Naive thymus-derived CD4-positive, alpha-beta T cell (primary cell): ENCODE measurements at regions of chr18 and their contacts with region 1.

Region 1: GRCh38 chr18:74495581-74496507 is at the start of gene CNDP2:
- DNase-seq: peak; percentile 93 to 100 (median 94)
- ATAC-seq: peak; percentile 89
- H3K4me3 ChIP-seq: peak within 1 kb of the TSS; percentile 75
- H3K4me3 Mint-ChIP-seq: peak within 1 kb of the TSS; percentile 79 to 98 (median 92)
- H3K27ac ChIP-seq: peak within 1 kb of the TSS; percentile 93
- H3K27ac Mint-ChIP-seq: peak within 1 kb of the TSS; percentile 95 to 100 (median 98)
- H3K4me1 ChIP-seq: peaks cover 33 to 43% of the 10 kb centered on the region in 2 donors
- H3K4me1 Mint-ChIP-seq: peaks cover 21 to 62% (median 49%) of the 10 kb centered on the region in 7 donors
- H3K27me3 ChIP-seq: no peaks in the 10 kb centered on the region
- H3K27me3 Mint-ChIP-seq: peaks cover 0 to 20% (median 0%) of the 10 kb centered on the region in 5 donors
- total RNA-seq, gene CNDP2: 112 to 169 (median 148) TPM

Region 2: GRCh38 chr18:74040459-74041332 is 455.1 kb before region 1 on chr18:
- CTCF ChIA-PET with region 1: no interaction called
- POLR2A ChIA-PET with region 1: no interaction called
- intact Hi-C with region 1: loop called in 1 of 2 experiments (anchors 1 kb)
- DNase-seq: peak; percentile 32 to 81 (median 62)
- ATAC-seq: peak; percentile 68
- H3K4me3 ChIP-seq: no peak overlapping the region
- H3K4me3 Mint-ChIP-seq: no peak overlapping the region
- H3K27ac ChIP-seq: no peak overlapping the region
- H3K27ac Mint-ChIP-seq: no peak overlapping the region
- H3K4me1 ChIP-seq: no peaks in the 10 kb centered on the region
- H3K4me1 Mint-ChIP-seq: peaks cover 0 to 5% (median 0%) of the 10 kb centered on the region in 7 donors
- H3K27me3 ChIP-seq: no peaks in the 10 kb centered on the region
- H3K27me3 Mint-ChIP-seq: no peaks in the 10 kb centered on the region

Region 3: DNA sequence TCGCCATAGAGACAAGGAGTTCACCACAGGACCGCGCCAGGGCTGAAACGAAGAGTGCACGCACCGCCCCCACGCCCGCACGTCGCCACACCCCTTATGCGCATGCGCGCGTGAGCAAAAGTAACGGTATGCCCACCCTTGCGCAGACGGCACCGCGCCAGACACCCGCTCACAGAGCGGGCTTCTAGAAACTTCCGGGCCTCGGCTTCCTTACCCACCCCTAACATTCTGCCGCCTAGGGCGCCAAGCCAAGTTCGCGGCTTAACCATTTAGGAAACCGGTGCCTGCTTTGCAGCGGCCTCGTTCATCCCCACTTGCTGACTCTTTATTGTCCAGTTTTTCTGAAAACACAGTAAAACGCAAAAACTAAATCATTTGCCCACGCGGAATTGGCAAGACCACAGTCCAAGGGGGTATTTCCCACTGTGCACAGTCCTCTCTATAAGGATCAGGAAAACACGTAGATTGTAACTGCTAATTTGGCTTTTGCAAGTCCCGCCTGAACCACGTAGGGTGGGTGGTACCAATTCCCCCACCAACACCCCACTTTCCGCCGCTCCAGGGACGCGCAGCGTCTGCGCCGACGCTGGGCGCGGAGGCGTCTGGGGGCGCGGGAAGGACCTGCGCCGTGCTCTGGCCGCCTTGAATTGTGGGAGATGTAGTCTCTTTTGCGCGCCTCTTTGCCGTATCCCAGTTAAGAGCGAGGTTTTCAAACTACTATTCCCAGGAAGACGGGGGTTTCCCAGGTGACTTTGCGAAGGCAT is 347.9 kb before region 1 on chr18 and contains the starts of genes FBXO15 and TIMM21:
- CTCF ChIA-PET with region 1: no interaction called
- POLR2A ChIA-PET with region 1: no interaction called
- intact Hi-C with region 1: loop called (anchors 1 kb)
- DNase-seq: peak; percentile 92 to 97 (median 96)
- ATAC-seq: peak; percentile 91
- H3K4me3 ChIP-seq: peak within 1 kb of the TSS; percentile 82
- H3K4me3 Mint-ChIP-seq: peak within 1 kb of the TSS; percentile 95 to 100 (median 97)
- H3K27ac ChIP-seq: peak within 1 kb of the TSS; percentile 92
- H3K27ac Mint-ChIP-seq: peak within 1 kb of the TSS; percentile 98 to 100 (median 99)
- H3K4me1 ChIP-seq: peaks cover 15 to 25% of the 10 kb centered on the region in 2 donors
- H3K4me1 Mint-ChIP-seq: peaks cover 23 to 60% (median 55%) of the 10 kb centered on the region in 7 donors
- H3K27me3 ChIP-seq: no peaks in the 10 kb centered on the region
- H3K27me3 Mint-ChIP-seq: peaks cover 0 to 7% (median 0%) of the 10 kb centered on the region in 5 donors
- total RNA-seq, gene FBXO15: 1.1 to 4.9 (median 1.3) TPM
- total RNA-seq, gene TIMM21: 9.7 to 30.2 (median 27.9) TPM

Region 4: DNA sequence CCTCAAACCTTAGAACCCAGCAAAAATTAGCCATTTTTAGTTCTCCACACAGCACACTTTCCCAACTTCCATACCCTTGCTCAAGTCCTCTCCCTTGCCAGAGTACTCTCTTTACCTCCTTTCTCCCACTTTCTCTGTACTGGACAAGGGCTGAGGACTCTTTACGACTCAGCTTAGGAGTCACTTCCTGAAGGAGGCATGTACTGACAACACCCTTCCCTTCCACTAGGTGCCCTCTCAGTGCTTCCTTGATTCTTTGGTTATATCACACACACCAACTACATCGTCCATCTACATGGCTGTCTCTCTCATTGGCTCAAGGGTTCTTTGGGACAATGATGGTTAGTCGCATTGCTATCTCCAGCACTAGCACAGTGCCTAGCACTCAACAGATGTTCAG is 185.4 kb before region 1 on chr18:
- CTCF ChIA-PET with region 1: interaction called, 4 read pairs
- POLR2A ChIA-PET with region 1: no interaction called
- intact Hi-C with region 1: loop called in 1 of 2 experiments (anchors 1 kb)
- DNase-seq: peak in 3 of 9 donors; percentile 10 to 15 (median 11)
- ATAC-seq: peak; percentile 46
- H3K4me3 ChIP-seq: no peak overlapping the region
- H3K4me3 Mint-ChIP-seq: no peak overlapping the region
- H3K27ac ChIP-seq: no peak overlapping the region
- H3K27ac Mint-ChIP-seq: no peak overlapping the region
- H3K4me1 ChIP-seq: no peaks in the 10 kb centered on the region
- H3K4me1 Mint-ChIP-seq: peaks cover 0 to 8% (median 0%) of the 10 kb centered on the region in 7 donors
- H3K27me3 ChIP-seq: no peaks in the 10 kb centered on the region
- H3K27me3 Mint-ChIP-seq: peaks cover 22 to 51% (median 35%) of the 10 kb centered on the region in 5 donors

Region 5: DNA sequence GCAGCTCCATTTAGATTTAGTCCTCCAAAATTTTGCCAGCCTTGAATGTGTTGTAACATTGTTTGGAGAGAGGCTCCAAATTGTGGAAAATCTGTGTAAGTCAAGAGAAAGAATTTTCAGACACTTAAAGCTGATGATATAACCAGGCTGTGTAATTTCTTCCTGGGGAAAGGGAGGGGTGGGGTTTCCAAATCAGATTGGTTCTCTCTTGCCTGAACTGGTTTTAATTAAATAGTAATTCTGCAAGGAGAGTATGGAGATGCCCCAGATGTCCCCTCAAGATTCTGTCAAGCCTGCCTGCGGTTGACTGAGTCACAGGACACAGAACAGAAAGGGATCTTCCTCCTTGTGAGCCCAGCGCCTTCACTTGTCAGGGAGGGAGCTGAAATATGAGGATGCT is 125.7 kb before region 1 on chr18:
- CTCF ChIA-PET with region 1: interaction called, 17 read pairs
- POLR2A ChIA-PET with region 1: interaction called, 30 read pairs
- intact Hi-C with region 1: loop called (anchors 1 kb)
- DNase-seq: no peak
- ATAC-seq: no peak
- H3K4me3 ChIP-seq: no peak overlapping the region
- H3K4me3 Mint-ChIP-seq: peak overlapping the region in 3 of 10 donors; percentile 8 to 30 (median 30)
- H3K27ac ChIP-seq: no peak overlapping the region
- H3K27ac Mint-ChIP-seq: peak overlapping the region in 3 of 9 donors; percentile 42 to 88 (median 55)
- H3K4me1 ChIP-seq: peaks cover 22 to 54% of the 10 kb centered on the region in 2 donors
- H3K4me1 Mint-ChIP-seq: peaks cover 26 to 72% (median 54%) of the 10 kb centered on the region in 7 donors
- H3K27me3 ChIP-seq: peaks cover 0 to 6% of the 10 kb centered on the region in 2 donors
- H3K27me3 Mint-ChIP-seq: peaks cover 0 to 28% (median 0%) of the 10 kb centered on the region in 5 donors

Region 6: DNA sequence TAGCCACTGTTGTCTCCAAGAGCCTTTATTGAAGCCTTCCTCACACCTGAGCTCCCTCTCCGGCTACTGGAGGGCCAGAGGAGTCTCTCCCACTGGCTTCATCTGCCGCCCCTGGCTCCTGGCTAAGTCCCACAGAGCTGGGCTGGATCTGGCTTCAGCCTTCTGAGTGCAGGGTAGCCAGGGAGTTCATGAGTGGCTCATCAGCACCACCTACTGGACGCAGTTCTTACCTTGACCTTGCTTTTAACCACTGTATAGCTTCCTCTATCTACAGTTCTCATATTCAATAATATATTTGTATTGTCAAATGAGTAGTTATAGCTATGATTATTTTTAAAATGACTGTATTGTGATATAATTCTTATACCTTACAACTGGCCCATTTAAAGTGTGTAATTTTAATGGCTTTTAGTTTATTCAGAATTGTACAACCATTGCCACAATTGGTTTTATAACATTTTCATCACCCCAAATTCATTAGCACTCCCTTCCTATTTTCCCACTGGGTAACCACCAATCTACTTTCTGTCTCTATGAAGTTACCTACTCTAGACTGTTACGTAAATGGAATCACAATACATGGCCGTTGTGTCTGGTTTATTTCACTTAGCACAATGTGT is 56.2 kb after region 1 on chr18:
- CTCF ChIA-PET with region 1: interaction called, 13 read pairs
- POLR2A ChIA-PET with region 1: interaction called, 3 read pairs
- intact Hi-C with region 1: loop called (anchors 1 kb)
- DNase-seq: peak; percentile 39 to 69 (median 63)
- ATAC-seq: peak; percentile 97
- H3K4me3 ChIP-seq: no peak overlapping the region
- H3K4me3 Mint-ChIP-seq: no peak overlapping the region
- H3K27ac ChIP-seq: no peak overlapping the region
- H3K27ac Mint-ChIP-seq: peak overlapping the region in 2 of 9 donors; percentile 3 to 70
- H3K4me1 ChIP-seq: no peaks in the 10 kb centered on the region
- H3K4me1 Mint-ChIP-seq: peaks cover 0 to 6% (median 0%) of the 10 kb centered on the region in 7 donors
- H3K27me3 ChIP-seq: no peaks in the 10 kb centered on the region
- H3K27me3 Mint-ChIP-seq: peaks cover 10 to 14% (median 13%) of the 10 kb centered on the region in 5 donors

Region 7: GRCh38 chr18:74609535-74609934 is 113.7 kb after region 1 on chr18:
- CTCF ChIA-PET with region 1: no interaction called
- POLR2A ChIA-PET with region 1: no interaction called
- intact Hi-C with region 1: no loop called
- DNase-seq: no peak
- ATAC-seq: no peak
- H3K4me3 ChIP-seq: no peak overlapping the region
- H3K4me3 Mint-ChIP-seq: no peak overlapping the region
- H3K27ac ChIP-seq: no peak overlapping the region
- H3K27ac Mint-ChIP-seq: no peak overlapping the region
- H3K4me1 ChIP-seq: peaks cover 0 to 8% of the 10 kb centered on the region in 2 donors
- H3K4me1 Mint-ChIP-seq: peaks cover 6 to 67% (median 50%) of the 10 kb centered on the region in 7 donors
- H3K27me3 ChIP-seq: no peaks in the 10 kb centered on the region
- H3K27me3 Mint-ChIP-seq: no peaks in the 10 kb centered on the region

Region 8: DNA sequence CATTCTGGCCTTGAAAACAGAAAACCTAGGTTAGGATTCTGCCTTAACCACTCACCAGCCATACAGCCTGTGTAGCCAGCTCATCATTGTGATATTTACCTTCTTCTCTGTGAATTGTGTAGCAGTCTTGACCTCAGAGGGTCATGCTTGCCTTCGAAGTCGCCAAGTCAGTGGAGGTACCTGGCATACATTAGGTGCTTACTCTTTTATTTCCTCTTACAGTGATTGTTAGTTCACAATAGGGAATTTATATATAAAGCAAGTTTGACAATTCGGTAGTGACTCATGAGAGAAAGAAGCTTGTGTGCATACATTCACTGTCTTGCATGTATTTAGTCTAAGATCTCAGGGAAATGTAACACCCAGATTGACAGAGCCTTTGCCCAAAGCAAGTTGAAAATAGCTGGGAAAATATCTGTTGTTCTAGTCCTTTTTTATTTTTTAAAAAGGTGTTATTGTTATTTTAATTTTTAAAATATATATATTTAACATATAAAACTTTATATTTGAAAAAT is 422.5 kb after region 1 on chr18:
- CTCF ChIA-PET with region 1: no interaction called
- POLR2A ChIA-PET with region 1: no interaction called
- intact Hi-C with region 1: no loop called
- DNase-seq: no peak
- ATAC-seq: no peak
- H3K4me3 ChIP-seq: no peak overlapping the region
- H3K4me3 Mint-ChIP-seq: no peak overlapping the region
- H3K27ac ChIP-seq: no peak overlapping the region
- H3K27ac Mint-ChIP-seq: no peak overlapping the region
- H3K4me1 ChIP-seq: no peaks in the 10 kb centered on the region
- H3K4me1 Mint-ChIP-seq: peaks cover 0 to 8% (median 0%) of the 10 kb centered on the region in 7 donors
- H3K27me3 ChIP-seq: no peaks in the 10 kb centered on the region
- H3K27me3 Mint-ChIP-seq: no peaks in the 10 kb centered on the region

Region 9: DNA sequence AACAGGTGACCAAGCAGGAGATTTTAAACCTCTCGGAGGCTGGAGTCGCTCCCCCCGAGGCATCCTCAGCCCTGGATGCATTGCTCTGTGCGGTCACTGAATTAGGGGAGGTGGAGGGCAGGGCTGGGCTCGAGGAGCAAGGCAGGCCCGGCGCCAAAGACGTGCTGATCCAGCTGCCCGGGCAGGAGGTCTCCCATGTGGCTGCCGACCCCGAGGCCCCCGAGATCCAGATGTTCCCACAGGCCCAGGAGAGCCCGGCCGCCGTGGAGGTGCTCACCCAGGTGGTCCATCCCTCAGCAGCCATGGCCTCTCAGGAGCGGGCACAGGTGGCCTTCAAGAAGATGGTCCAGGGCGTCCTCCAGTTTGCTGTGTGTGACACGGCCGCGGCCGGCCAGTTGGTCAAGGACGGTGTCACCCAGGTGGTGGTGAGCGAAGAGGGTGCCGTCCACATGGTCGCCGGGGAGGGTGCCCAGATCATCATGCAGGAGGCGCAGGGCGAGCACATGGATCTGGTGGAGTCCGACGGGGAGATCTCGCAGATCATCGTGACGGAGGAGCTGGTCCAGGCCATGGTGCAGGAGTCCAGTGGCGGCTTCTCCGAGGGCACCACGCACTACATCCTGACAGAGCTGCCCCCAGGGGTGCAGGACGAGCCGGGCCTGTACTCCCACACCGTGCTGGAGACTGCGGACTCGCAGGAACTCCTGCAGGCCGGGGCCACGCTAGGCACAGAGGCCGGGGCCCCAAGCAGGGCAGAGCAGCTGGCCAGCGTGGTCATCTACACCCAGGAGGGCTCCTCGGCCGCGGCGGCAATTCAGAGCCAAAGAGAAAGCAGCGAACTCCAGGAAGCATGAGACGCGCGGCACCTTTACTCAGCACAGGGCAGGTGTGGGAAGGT is 568.0 kb after region 1 on chr18:
- CTCF ChIA-PET with region 1: no interaction called
- POLR2A ChIA-PET with region 1: no interaction called
- intact Hi-C with region 1: no loop called
- DNase-seq: no peak
- ATAC-seq: no peak
- H3K4me3 ChIP-seq: no peak overlapping the region
- H3K4me3 Mint-ChIP-seq: no peak overlapping the region
- H3K27ac ChIP-seq: no peak overlapping the region
- H3K27ac Mint-ChIP-seq: no peak overlapping the region
- H3K4me1 ChIP-seq: no peaks in the 10 kb centered on the region
- H3K4me1 Mint-ChIP-seq: peaks cover 0 to 16% (median 14%) of the 10 kb centered on the region in 7 donors
- H3K27me3 ChIP-seq: no peaks in the 10 kb centered on the region
- H3K27me3 Mint-ChIP-seq: no peaks in the 10 kb centered on the region

Region 10: GRCh38 chr18:76492669-76493212 is 1996.9 kb after region 1 on chr18:
- CTCF ChIA-PET with region 1: no interaction called
- POLR2A ChIA-PET with region 1: no interaction called
- intact Hi-C with region 1: loop called in 1 of 2 experiments (anchors 5 kb)
- DNase-seq: peak; percentile 97 to 99 (median 99)
- ATAC-seq: peak; percentile 86
- H3K4me3 ChIP-seq: peak overlapping the region; percentile 87
- H3K4me3 Mint-ChIP-seq: peak overlapping the region; percentile 94 to 96 (median 95)
- H3K27ac ChIP-seq: peak overlapping the region; percentile 65
- H3K27ac Mint-ChIP-seq: peak overlapping the region; percentile 57 to 95 (median 87)
- H3K4me1 ChIP-seq: peaks cover 8 to 9% of the 10 kb centered on the region in 2 donors
- H3K4me1 Mint-ChIP-seq: peaks cover 28 to 53% (median 41%) of the 10 kb centered on the region in 7 donors
- H3K27me3 ChIP-seq: no peaks in the 10 kb centered on the region
- H3K27me3 Mint-ChIP-seq: peaks cover 0 to 80% (median 0%) of the 10 kb centered on the region in 5 donors